A673 (cell line): ENCODE measurements at regions of chr10 and their contacts with region 1.

Region 1: DNA sequence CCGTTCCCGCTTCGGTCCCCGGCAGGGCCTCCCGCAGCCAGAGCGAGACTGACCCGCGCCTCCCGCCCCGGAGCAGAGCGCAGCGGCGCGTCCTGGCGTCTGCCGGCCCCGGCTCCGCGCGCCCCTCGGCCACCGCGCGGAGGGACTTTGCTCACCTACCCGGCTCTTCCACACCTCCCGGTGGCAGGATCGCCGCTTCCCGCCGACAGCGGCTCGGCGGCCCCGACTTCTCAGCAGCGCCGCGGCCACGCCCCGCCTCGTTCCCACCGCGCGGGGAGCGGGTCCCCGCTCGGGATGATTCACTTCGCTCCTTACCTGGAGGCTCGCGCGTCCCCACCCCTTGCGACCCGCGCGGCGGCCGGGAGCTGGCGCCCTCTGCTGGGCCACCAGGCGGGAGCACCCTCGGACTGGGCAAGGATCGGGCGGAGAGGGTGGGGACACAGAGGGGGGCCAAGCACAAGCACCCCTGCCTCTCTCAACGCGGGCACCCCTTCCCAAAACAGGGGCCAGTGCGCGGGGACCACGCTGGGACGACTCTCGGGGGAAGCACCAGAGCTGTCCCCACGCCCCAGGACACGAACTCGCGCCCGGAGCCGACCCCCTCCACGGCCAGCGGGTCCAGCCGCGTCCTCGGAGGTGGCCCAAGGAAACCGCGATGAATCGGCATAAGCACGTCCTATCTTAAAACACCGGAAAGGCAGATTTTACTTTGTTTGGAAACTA is 101.0 kb upstream of the SVIL start:
- DNase-seq: peak; percentile 86
- H3K4me3 ChIP-seq: peak overlapping the region; percentile 86
- H3K27ac ChIP-seq: peak overlapping the region; percentile 75
- H3K4me1 ChIP-seq: no peaks in the 10 kb centered on the region
- H3K27me3 ChIP-seq: no peaks in the 10 kb centered on the region
- CTCF ChIP-seq: peak; percentile 95

Region 2: GRCh38 chr10:29191674-29192073 is 544.1 kb before region 1 on chr10:
- CTCF ChIA-PET with region 1: no interaction called
- POLR2A ChIA-PET with region 1: interaction called, 15 read pairs
- intact Hi-C with region 1: no loop called
- DNase-seq: no peak
- H3K4me3 ChIP-seq: no peak overlapping the region
- H3K27ac ChIP-seq: no peak overlapping the region
- H3K4me1 ChIP-seq: no peaks in the 10 kb centered on the region
- H3K27me3 ChIP-seq: no peaks in the 10 kb centered on the region
- CTCF ChIP-seq: no peak

Region 3: DNA sequence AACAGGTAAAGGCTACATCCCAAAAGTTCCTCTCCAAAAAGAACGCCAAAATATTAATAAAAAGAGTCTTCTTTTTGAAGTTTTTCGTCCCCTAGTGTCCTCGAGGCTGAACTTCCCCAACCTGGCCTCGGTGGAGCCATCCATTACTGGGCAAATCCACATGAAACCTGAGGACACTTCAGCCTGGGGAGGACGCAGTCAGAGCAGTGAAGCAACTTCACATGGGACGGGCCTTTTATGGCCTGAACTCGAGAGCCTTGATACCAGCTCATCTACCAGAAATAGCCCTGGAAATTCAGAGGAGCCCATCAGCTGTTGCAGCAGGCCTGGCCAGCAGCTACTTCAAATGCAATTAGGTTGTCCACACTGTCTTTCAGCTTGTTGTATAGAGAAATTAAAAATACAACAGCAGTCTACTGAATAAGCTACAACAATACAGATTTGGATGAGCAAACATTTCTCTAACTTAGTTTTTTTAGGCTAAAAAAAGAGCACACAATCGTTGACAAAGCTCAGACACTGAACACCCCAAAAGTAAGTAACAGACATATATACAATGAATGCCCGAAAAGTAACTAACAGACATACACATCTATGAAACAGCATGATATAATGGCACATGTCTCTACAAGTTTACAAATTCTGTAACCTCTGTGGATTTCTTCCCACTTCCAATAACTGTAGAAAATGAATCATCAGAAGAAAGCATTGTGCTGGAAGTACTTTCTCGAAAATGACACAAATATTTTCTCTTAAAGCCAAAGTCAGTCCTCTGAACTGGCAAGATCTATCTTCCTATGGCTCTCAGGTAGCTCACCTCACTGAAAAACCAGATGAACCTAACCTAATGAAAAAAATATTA is 100.8 kb before region 1 on chr10 and contains the start of gene SVIL:
- CTCF ChIA-PET with region 1: no interaction called
- POLR2A ChIA-PET with region 1: no interaction called
- intact Hi-C with region 1: loop called (anchors 5 kb)
- DNase-seq: no peak
- H3K4me3 ChIP-seq: peak within 1 kb of the TSS; percentile 0
- H3K27ac ChIP-seq: peak within 1 kb of the TSS; percentile 71
- H3K4me1 ChIP-seq: peaks cover 44% of the 10 kb centered on the region
- H3K27me3 ChIP-seq: no peaks in the 10 kb centered on the region
- CTCF ChIP-seq: no peak
- total RNA-seq, gene SVIL: 28.0 and 31.9 TPM in 2 replicates